Calu3 (cell line): ENCODE measurements at regions of chr2 and their contacts with region 1.

Region 1: GRCh38 chr2:235595422-235596010 is 101.7 kb downstream of the AGAP1 start:
- DNase-seq: peak; percentile 78
- H3K4me3 Mint-ChIP-seq: no peak overlapping the region
- H3K27ac Mint-ChIP-seq: no peak overlapping the region
- H3K4me1 Mint-ChIP-seq: peaks cover 13% of the 10 kb centered on the region
- H3K27me3 Mint-ChIP-seq: no peaks in the 10 kb centered on the region
- CTCF ChIP-seq: peak; percentile 56

Region 2: GRCh38 chr2:235135990-235136561 is 459.4 kb before region 1 on chr2:
- CTCF ChIA-PET with region 1: interaction called, 9 read pairs
- intact Hi-C with region 1: loop called (anchors 1 kb)
- DNase-seq: peak; percentile 85
- H3K4me3 Mint-ChIP-seq: no peak overlapping the region
- H3K27ac Mint-ChIP-seq: no peak overlapping the region
- H3K4me1 Mint-ChIP-seq: peaks cover 5% of the 10 kb centered on the region
- H3K27me3 Mint-ChIP-seq: peaks cover 52% of the 10 kb centered on the region
- CTCF ChIP-seq: peak; percentile 90

Region 3: DNA sequence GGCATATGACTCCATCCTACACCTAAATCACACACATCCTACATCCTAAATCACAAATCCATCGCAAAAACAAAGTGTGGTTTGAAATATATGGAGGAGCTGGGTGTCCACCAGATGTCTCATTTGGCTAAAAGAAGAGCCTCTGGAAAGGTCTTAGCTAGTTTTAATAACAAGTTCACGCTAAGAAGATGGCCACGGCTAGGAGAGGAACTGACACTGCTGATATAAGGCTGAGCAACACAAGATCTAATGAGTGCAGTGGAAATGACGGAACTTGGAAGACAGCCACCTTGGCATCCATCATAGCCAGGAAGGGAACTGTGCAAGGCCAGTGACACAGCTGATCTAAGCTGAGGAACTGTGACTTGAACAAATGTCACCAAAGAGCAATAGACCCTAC is 161.7 kb before region 1 on chr2:
- CTCF ChIA-PET with region 1: interaction called, 10 read pairs
- intact Hi-C with region 1: loop called (anchors 5 kb)
- DNase-seq: no peak
- H3K4me3 Mint-ChIP-seq: no peak overlapping the region
- H3K27ac Mint-ChIP-seq: no peak overlapping the region
- H3K4me1 Mint-ChIP-seq: no peaks in the 10 kb centered on the region
- H3K27me3 Mint-ChIP-seq: peaks cover 44% of the 10 kb centered on the region
- CTCF ChIP-seq: no peak

Region 4: DNA sequence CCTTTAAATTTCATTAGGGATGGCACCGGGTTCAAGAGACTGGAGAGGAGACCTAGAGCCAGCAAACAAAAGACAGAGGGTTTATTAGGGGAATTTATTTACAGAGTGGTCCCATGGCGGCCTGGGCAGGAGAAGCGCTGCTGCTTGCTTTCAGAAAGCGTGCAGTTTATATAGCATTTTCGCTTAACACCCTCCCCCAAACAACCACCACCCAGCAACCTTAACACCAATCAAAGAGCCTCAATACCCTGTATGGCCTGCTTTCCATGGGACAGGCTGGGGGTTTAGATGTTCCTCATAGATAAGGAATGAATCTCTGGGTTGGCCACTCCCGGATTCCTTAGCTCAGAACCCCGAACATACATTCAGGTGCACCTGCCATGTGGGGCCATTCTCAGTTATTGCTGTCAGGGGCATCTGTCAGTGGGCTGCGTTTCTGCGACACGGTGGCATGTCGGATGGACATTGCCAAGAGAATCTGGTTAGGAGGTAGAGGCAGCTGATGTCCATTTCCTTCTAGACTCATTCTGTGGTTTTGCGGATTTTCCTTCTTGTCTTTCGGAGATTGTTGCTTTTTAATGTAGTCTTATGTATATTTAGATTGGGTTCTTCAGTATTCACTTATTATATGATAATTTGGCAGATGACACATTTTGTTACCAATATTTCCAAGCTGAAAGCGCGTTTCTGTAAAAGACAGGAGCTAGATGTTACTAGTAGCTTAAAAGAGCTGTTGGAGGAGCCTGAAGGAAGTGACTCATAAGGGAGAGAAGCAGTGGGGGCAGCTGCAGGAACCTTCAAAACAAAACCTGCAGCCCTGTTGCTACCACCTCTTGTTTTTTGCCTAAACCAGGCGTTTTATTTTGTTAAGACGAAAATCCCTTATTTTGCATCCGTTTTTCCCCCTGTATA is 94.5 kb before region 1 on chr2:
- CTCF ChIA-PET with region 1: interaction called, 10 read pairs
- intact Hi-C with region 1: loop called (anchors 2 kb)
- DNase-seq: peak; percentile 21
- H3K4me3 Mint-ChIP-seq: peak overlapping the region; percentile 48
- H3K27ac Mint-ChIP-seq: peak overlapping the region; percentile 31
- H3K4me1 Mint-ChIP-seq: peaks cover 55% of the 10 kb centered on the region
- H3K27me3 Mint-ChIP-seq: no peaks in the 10 kb centered on the region
- CTCF ChIP-seq: no peak

Region 5: DNA sequence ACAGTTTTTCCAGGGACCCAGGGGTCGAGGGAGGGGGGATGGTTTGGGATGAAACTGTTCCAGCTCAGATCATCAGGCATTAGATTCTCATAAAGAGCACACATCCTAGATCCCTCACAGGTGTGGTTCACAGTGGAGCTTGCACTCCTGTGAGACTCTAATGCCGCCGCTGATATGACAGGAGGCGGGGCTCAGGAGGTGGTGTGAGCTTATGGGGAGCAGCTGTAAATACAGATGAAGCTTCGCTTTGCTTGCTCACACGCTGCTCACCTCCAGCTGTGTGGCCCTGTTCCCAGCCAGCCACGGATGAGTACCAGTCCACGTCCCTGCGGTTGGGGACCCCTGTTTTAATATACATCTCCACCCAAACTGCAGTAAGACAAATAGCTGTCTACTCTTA is 102.5 kb after region 1 on chr2:
- CTCF ChIA-PET with region 1: no interaction called
- intact Hi-C with region 1: no loop called
- DNase-seq: no peak
- H3K4me3 Mint-ChIP-seq: no peak overlapping the region
- H3K27ac Mint-ChIP-seq: no peak overlapping the region
- H3K4me1 Mint-ChIP-seq: peaks cover 33% of the 10 kb centered on the region
- H3K27me3 Mint-ChIP-seq: no peaks in the 10 kb centered on the region
- CTCF ChIP-seq: no peak

Region 6: GRCh38 chr2:235746257-235747084 is 151.0 kb after region 1 on chr2:
- CTCF ChIA-PET with region 1: interaction called, 56 read pairs
- intact Hi-C with region 1: loop called (anchors 1 kb)
- DNase-seq: peak; percentile 69
- H3K4me3 Mint-ChIP-seq: no peak overlapping the region
- H3K27ac Mint-ChIP-seq: no peak overlapping the region
- H3K4me1 Mint-ChIP-seq: peaks cover 11% of the 10 kb centered on the region
- H3K27me3 Mint-ChIP-seq: no peaks in the 10 kb centered on the region
- CTCF ChIP-seq: peak; percentile 76